ENCODE measurements at regions of chr6 and their contacts with region 1.

Region 1: GRCh38 chr6:104789770-104790190 is 69.9 kb downstream of the HACE1 start:
- DNase-seq: peak; percentile 29
- CTCF ChIP-seq: peak; percentile 33

Region 2: GRCh38 chr6:104771258-104771832 is 18.4 kb before region 1 on chr6:
- CTCF ChIA-PET with region 1: interaction called, 18 read pairs
- POLR2A ChIA-PET with region 1: no interaction called
- DNase-seq: peak; percentile 18
- CTCF ChIP-seq: no peak

Region 3: GRCh38 chr6:104809116-104809515 is 19.3 kb after region 1 on chr6:
- CTCF ChIA-PET with region 1: interaction called, 11 read pairs
- POLR2A ChIA-PET with region 1: interaction called, 3 read pairs
- DNase-seq: no peak
- CTCF ChIP-seq: no peak

Measured in GM10248 (cell line).